Cardiac septum (tissue), 1 donor: ENCODE measurements at regions of chr18 and their contacts with region 1.

Region 1: GRCh38 chr18:55234366-55235093 is 275.3 kb upstream of the CCDC68 start:
- DNase-seq: peak; percentile 76

Region 2: DNA sequence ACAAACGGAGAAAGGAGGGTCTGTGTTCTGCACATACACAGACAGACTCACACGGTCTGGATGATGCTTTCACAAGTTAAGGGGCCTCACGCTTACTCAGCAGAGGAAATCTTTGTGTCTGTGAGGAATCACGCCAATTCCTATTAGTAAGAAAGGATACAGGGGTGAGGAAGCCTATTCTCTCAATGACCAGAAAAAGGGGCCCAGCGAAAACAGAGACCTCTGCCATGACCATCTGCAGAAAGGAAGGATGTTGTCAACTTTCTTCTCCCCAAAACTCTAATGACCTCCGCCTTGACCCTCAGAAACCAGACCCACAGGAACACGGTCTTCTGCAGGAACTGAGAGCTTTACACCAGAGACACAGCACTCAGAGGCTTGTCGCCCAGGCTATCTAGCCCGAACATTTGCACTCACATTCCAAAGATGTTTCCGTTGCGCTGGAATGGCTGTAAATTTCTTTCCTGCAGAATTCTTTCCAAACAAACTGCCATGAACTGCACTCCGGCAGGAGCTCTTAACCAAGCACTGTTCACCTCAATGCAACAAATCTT is 167.2 kb after region 1 on chr18:
- intact Hi-C with region 1: loop called (anchors 5 kb)
- DNase-seq: no peak

Region 3: GRCh38 chr18:55907453-55908175 is 673.1 kb after region 1 on chr18:
- intact Hi-C with region 1: no loop called
- DNase-seq: no peak